Motor neuron (in vitro differentiated cells): ENCODE measurements at regions of chr11 and their contacts with region 1.

Region 1: DNA sequence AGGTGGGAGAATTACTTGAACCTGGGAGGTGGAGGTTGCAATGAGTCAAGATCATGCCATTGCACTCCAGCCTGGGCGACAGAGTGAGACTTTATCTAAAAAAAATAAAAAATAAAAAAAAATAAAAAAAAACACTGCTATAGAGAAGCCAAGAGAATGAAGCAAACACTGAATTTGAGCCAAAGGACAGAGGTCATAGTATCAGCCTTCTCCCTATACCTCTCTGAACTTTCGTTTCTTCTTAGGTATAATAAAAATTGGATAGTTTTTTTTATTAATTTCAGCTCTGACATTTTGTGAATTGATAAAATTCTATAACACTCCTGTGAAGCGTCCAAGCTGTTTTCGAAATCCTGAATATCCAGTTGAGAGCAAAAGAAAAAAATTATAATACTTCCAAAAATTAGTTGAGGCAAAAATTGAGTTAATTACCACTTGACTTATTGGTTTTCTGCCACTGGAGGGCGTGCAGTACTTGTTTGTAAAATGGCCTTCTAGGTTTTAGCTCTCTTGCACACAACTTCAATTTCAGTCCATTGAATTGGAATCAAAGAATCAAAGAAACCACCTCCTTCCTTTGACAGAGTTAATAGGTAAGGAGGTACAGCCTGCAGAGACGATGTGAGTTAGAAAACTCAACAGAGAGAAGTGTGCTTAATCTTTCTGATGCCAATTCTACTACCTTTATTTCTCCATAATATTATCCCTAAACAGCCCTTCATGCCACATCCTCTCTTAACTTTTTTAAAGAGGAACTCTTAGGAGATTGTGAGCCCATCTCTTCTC is 143.2 kb downstream of the BBOX1 start:
- ATAC-seq: peak in 4 of 8 experiments; percentile 13 to 64 (median 31)
- H3K4me3 ChIP-seq: no peak overlapping the region
- H3K27ac ChIP-seq: no peak overlapping the region
- H3K4me1 ChIP-seq: no peaks in the 10 kb centered on the region

Region 2: DNA sequence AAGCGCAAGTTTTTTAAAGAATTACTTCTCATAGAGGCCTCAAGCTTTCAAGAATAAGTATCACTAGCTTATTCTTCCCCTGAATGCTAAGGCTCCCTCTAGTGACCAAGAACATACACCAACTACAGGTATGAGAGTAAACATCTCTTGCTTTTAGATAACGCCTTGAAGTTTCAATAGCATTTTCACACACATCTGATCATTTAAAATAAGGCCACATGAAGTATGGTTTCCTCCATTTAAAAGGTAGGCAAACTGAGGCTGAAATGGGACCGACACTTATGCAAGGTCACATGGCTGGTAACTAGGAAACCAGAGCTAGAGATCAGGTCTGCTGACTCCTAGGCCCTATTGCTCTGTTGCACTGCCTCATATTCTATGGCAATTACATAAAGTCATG is 112.6 kb after region 1 on chr11:
- in situ Hi-C with region 1: loop called in 2 of 9 experiments (anchors 25 kb)
- ATAC-seq: peak in 3 of 8 experiments; percentile 20 to 88 (median 38)
- H3K4me3 ChIP-seq: no peak overlapping the region
- H3K27ac ChIP-seq: no peak overlapping the region
- H3K4me1 ChIP-seq: no peaks in the 10 kb centered on the region

Region 3: DNA sequence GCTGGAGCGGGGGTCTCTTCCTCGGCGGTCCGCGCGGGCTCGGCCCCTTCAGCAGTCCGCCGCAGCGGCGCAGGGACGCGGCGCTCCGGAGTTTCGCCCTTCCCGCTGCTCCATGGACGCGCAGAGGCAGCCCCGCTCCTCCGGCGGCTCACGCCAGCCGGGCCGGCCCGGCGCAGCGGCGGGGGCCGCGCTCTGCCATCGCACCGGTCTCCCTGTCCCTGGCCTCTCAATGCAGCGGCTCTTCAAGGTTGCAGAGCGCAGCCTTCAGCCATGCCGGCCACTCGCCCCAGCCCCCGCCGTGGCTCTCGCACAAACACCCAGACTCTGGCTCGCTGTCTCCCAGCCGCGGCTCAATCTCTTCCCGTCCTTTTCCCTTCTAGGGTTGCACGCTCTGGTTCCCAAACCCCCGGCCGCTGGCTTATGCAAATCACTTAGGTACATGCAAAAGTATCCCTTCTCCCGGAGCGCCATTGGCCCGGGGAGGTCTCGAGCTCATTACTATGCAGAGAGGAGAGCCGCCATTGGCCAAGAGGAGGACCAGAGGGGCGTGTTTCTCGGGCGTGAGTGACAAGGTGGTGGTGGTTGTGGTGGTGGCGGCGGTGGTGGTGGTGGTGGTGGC is 288.6 kb after region 1 on chr11 and contains the start of gene LGR4:
- in situ Hi-C with region 1: loop called in 8 of 9 experiments (anchors 10 to 25 kb)
- ATAC-seq: peak; percentile 85 to 94 (median 92)
- H3K4me3 ChIP-seq: peak within 1 kb of the TSS; percentile 80 to 86 (median 84)
- H3K27ac ChIP-seq: peak within 1 kb of the TSS; percentile 63 to 87
- H3K4me1 ChIP-seq: peaks cover 15 to 19% of the 10 kb centered on the region in 2 donors
- total RNA-seq, gene LGR4: 22.3 to 79.2 (median 36.7) TPM

Region 4: GRCh38 chr11:27497284-27497866 is 313.5 kb after region 1 on chr11:
- in situ Hi-C with region 1: loop called in 4 of 9 experiments (anchors 10 to 25 kb)
- ATAC-seq: peak in 4 of 8 experiments; percentile 37 to 56 (median 54)
- H3K4me3 ChIP-seq: no peak overlapping the region
- H3K27ac ChIP-seq: no peak overlapping the region
- H3K4me1 ChIP-seq: no peaks in the 10 kb centered on the region